CD4-positive, alpha-beta memory T cell (primary cell): ENCODE measurements at regions of chr4 and their contacts with region 1.

Region 1: DNA sequence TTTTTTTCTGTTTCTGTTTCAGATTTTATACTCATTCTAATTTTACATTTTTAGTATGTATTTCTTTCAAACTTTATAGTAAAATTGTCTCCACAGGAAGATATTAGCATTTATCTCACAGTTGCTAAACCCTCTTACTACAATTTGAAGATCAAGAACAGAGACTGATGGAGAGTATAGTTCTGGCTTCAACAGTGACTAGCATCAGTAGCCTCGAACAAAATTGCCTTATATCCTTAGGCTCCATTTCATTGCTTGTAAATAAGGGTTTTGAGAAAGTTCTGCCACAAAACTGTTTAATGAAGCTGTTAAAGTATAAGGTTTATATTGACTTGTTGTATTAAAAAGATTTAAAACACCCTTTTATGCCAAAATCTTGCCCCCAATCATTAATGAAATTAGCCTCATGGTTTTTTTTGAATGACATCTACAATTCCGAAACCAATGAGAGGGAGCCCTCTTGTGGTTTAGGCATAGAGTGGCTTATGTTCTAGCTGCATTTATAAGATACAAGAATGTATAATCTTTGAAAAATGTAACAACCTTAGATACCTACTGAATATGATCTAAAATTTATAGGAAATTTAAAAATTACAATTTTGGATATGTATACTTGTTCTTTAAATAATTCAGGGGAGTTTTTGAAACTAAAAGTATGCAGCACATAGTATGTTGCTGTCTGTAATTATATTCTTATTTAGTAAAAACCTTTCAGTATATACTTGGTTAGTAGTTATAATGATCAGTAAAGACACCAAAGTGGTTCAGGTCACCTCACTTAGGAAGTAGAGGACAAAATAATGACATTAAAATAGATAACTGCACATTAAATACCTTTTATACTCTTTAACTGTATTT is 109.8 kb upstream of the HPGD start:
- DNase-seq: peak in 4 of 5 donors; percentile 4 to 25 (median 13)
- H3K4me3 ChIP-seq: no peak overlapping the region
- H3K4me3 Mint-ChIP-seq: no peak overlapping the region
- H3K27ac ChIP-seq: no peak overlapping the region
- H3K27ac Mint-ChIP-seq: no peak overlapping the region
- H3K4me1 ChIP-seq: no peaks in the 10 kb centered on the region
- H3K4me1 Mint-ChIP-seq: peaks cover 0 to 4% (median 1%) of the 10 kb centered on the region in 4 donors
- H3K27me3 ChIP-seq: no peaks in the 10 kb centered on the region
- H3K27me3 Mint-ChIP-seq: no peaks in the 10 kb centered on the region

Region 2: DNA sequence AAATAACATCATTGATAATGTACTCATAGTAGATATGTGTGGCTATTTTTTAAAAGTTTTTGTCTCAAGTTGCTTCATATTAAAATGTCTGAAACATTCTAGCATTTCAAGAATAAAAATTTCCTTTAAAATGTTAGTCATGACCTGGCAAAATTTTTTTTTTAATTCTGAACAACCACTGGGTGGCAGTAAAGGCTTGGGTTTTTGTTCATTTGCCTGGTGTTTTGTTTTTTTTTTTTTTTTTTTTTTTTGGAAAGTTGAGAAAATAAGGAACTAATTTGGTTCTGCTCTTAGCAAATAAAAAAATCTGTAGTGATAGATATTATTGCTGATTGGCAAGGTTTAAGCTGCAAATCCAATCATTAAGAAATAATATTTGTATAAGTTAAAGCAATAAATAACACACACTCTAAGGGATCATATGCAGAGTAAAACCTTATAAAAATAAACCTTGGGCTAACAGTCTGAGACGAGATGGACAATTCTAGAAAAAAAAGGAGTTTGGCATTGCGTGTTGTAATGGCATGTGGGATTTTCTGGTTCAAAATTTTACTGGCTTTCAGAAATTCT is 267.0 kb before region 1 on chr4:
- CTCF ChIA-PET with region 1: no interaction called
- POLR2A ChIA-PET with region 1: no interaction called
- intact Hi-C with region 1: loop called (anchors 1 kb)
- DNase-seq: peak in 4 of 5 donors; percentile 0 to 19 (median 16)
- H3K4me3 ChIP-seq: no peak overlapping the region
- H3K4me3 Mint-ChIP-seq: no peak overlapping the region
- H3K27ac ChIP-seq: no peak overlapping the region
- H3K27ac Mint-ChIP-seq: no peak overlapping the region
- H3K4me1 ChIP-seq: no peaks in the 10 kb centered on the region
- H3K4me1 Mint-ChIP-seq: no peaks in the 10 kb centered on the region
- H3K27me3 ChIP-seq: no peaks in the 10 kb centered on the region
- H3K27me3 Mint-ChIP-seq: peaks cover 0 to 4% of the 10 kb centered on the region in 2 donors

Region 3: DNA sequence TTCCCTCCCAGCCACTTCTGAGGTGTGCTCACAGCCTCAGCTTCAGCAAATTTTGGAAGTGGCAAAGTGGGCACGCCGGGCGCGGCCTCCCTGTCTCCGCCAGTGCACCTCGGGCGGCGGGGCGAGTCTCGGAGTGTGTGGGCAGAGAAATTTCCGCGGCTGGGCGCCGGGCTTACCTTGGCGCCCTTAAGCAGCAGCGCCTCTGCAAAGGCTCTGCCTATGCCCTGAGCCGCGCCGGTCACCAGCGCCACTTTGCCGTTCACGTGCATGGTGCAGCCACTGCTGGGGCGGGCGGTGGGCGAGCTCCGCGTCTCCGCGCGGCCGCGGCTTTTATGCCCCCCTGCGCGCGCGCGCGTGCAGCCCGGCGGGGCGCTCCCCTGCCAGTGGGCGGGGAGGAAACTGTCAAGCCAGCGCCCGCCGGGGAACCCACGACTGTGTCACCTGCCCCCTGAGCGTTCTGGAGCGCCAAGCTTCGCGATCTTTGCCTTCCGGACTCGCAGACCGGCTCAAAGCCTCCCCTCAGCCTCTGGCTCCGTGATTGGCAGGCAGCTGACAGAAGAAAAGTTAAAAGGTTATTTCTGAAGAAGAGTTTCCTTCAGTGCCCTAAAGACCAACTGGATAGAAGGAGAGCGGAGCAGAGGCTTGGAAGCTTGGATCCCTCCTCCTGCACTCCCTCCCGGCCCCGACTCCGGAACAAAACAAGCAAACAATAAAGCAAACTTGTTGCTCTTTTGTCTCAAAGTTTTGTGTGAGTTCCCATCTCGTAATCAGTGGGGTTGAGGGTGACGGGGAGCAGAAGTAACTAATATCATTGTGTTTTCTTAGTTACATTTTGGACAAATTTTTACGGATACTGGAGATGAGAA is 109.7 kb before region 1 on chr4 and contains the start of gene HPGD:
- CTCF ChIA-PET with region 1: no interaction called
- POLR2A ChIA-PET with region 1: no interaction called
- intact Hi-C with region 1: loop called (anchors 2 kb)
- DNase-seq: peak; percentile 59 to 77 (median 75)
- H3K4me3 ChIP-seq: peak within 1 kb of the TSS in 1 of 2 donors; percentile 32
- H3K4me3 Mint-ChIP-seq: peak within 1 kb of the TSS; percentile 81 to 88 (median 84)
- H3K27ac ChIP-seq: peak within 1 kb of the TSS; percentile 49
- H3K27ac Mint-ChIP-seq: peak within 1 kb of the TSS; percentile 20 to 90 (median 82)
- H3K4me1 ChIP-seq: no peaks in the 10 kb centered on the region
- H3K4me1 Mint-ChIP-seq: peaks cover 2 to 11% (median 4%) of the 10 kb centered on the region in 4 donors
- H3K27me3 ChIP-seq: peaks cover 4% of the 10 kb centered on the region
- H3K27me3 Mint-ChIP-seq: peaks cover 3 to 24% of the 10 kb centered on the region in 2 donors
- total RNA-seq, gene HPGD: 2.4 to 4.7 TPM